ENCODE measurements at regions of chr5 and their contacts with region 1.

Region 1: GRCh38 chr5:142356716-142357473 is 32.1 kb upstream of the SPRY4 start:
- DNase-seq: peak; percentile 80
- ATAC-seq: peak; percentile 84
- H3K4me3 Mint-ChIP-seq: peak overlapping the region; percentile 83
- H3K27ac Mint-ChIP-seq: peak overlapping the region; percentile 79
- H3K4me1 Mint-ChIP-seq: peaks cover 40% of the 10 kb centered on the region
- H3K27me3 Mint-ChIP-seq: peaks cover 5% of the 10 kb centered on the region
- CTCF ChIP-seq: no peak

Region 2: GRCh38 chr5:142290577-142291299 is 66.2 kb before region 1 on chr5:
- CTCF ChIA-PET with region 1: no interaction called
- POLR2A ChIA-PET with region 1: no interaction called
- intact Hi-C with region 1: no loop called
- DNase-seq: no peak
- ATAC-seq: no peak
- H3K4me3 Mint-ChIP-seq: no peak overlapping the region
- H3K27ac Mint-ChIP-seq: no peak overlapping the region
- H3K4me1 Mint-ChIP-seq: peaks cover 8% of the 10 kb centered on the region
- H3K27me3 Mint-ChIP-seq: peaks cover 10% of the 10 kb centered on the region
- CTCF ChIP-seq: no peak

Region 3: DNA sequence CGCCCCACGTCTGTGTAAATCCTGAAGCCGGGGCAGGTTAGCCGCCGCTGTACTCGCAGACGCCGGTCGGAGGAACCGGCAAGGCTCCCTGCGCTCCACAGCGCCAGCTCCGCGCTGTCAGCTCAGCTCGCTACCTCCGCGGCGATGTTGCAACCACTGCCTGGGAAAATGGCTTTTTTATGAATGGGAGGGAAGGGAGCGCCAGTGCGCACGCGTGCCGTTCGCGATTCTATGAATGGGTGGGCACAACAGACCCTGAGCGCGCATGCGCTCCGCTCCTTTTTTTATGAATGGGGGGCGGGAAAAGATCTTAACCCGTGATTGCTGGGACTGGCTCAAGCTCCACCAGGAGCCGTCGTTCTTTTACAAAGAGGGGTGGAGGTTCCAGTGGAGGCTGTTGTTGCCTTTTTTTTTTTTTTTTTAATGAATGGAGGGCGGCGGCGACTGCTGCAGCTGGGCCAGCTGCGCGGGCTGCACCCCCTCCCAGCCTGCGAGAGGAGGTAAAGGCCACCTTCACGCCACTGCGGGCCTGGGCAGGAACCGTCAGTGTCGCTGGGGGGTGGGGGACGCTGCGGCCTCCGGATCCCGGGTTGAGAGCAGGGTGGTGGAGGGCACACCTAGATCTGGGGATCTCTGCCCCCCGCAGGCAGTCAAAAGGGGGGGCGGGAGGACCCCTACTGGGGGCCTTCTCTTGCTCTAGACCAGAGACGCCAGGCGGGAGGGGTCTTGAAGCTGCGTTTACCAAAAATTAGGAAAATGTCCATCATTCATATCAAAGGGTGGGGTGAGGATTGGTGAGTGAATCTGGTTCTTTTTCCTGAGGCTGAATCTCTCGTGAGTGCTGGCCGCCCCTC is 31.8 kb before region 1 on chr5 and contains the start of gene SPRY4:
- CTCF ChIA-PET with region 1: no interaction called
- POLR2A ChIA-PET with region 1: interaction called, 5 read pairs
- intact Hi-C with region 1: loop called (anchors 1 kb)
- DNase-seq: peak; percentile 70
- ATAC-seq: peak; percentile 77
- H3K4me3 Mint-ChIP-seq: peak within 1 kb of the TSS; percentile 85
- H3K27ac Mint-ChIP-seq: no peak within 1 kb of the TSS
- H3K4me1 Mint-ChIP-seq: peaks cover 41% of the 10 kb centered on the region
- H3K27me3 Mint-ChIP-seq: peaks cover 66% of the 10 kb centered on the region
- CTCF ChIP-seq: no peak
- total RNA-seq, gene SPRY4: not detected in 2 replicates

Region 4: GRCh38 chr5:142339781-142340180 is 17.1 kb before region 1 on chr5:
- CTCF ChIA-PET with region 1: no interaction called
- POLR2A ChIA-PET with region 1: interaction called, 14 read pairs
- intact Hi-C with region 1: no loop called
- DNase-seq: no peak
- ATAC-seq: no peak
- H3K4me3 Mint-ChIP-seq: no peak overlapping the region
- H3K27ac Mint-ChIP-seq: no peak overlapping the region
- H3K4me1 Mint-ChIP-seq: no peaks in the 10 kb centered on the region
- H3K27me3 Mint-ChIP-seq: peaks cover 15% of the 10 kb centered on the region
- CTCF ChIP-seq: no peak

Region 5: DNA sequence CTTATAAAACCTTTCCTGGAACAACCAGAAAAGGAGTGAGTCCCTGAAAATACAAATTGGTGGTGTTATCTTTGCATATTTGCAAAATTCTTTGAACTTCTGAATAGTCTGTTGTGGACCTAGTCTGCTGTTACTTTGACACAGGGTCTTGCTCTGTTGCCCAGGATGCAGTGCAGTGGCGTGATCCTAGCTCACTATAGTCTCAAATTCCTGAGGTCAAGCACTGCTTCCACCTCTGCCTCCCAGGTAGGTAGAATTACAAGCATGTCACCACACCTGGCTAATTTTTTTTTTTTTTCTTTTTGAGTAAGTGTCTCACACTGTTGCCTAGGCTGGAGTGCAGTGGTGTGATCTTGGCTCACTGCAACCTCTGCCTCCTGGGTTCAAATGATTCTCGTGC is 11.6 kb after region 1 on chr5:
- CTCF ChIA-PET with region 1: no interaction called
- POLR2A ChIA-PET with region 1: no interaction called
- intact Hi-C with region 1: no loop called
- DNase-seq: no peak
- ATAC-seq: no peak
- H3K4me3 Mint-ChIP-seq: no peak overlapping the region
- H3K27ac Mint-ChIP-seq: no peak overlapping the region
- H3K4me1 Mint-ChIP-seq: peaks cover 18% of the 10 kb centered on the region
- H3K27me3 Mint-ChIP-seq: peaks cover 17% of the 10 kb centered on the region
- CTCF ChIP-seq: no peak

Region 6: GRCh38 chr5:142422429-142422828 is 65.5 kb after region 1 on chr5:
- CTCF ChIA-PET with region 1: no interaction called
- POLR2A ChIA-PET with region 1: interaction called, 4 read pairs
- intact Hi-C with region 1: loop called (anchors 1 kb)
- DNase-seq: no peak
- ATAC-seq: no peak
- H3K4me3 Mint-ChIP-seq: no peak overlapping the region
- H3K27ac Mint-ChIP-seq: no peak overlapping the region
- H3K4me1 Mint-ChIP-seq: peaks cover 55% of the 10 kb centered on the region
- H3K27me3 Mint-ChIP-seq: peaks cover 3% of the 10 kb centered on the region
- CTCF ChIP-seq: no peak

Measured in activated B cell treated with CpG ODN at 0.5 μM for 24 hours (primary cell).